HepG2 (cell line): ENCODE measurements at regions of chr4 and their contacts with region 1.

Region 1: GRCh38 chr4:81069706-81070331 is 39.3 kb downstream of the BMP3 start:
- DNase-seq: peak; percentile 82
- ATAC-seq: peak; percentile 100
- H3K4me3 ChIP-seq: no peak overlapping the region
- H3K27ac ChIP-seq: no peak overlapping the region
- H3K4me1 ChIP-seq: no peaks in the 10 kb centered on the region
- H3K27me3 ChIP-seq: no peaks in the 10 kb centered on the region
- CTCF ChIP-seq: peak; percentile 88
- EP300 ChIP-seq: no peak
- POLR2A ChIP-seq: no peak
- RAD21 ChIP-seq: peak; percentile 38; the same call in 1 of the 2 replicates

Region 2: GRCh38 chr4:80852061-80852460 is 217.8 kb before region 1 on chr4:
- CTCF ChIA-PET with region 1: no interaction called
- POLR2A ChIA-PET with region 1: no interaction called
- in situ Hi-C with region 1: no loop called
- intact Hi-C with region 1: no loop called
- DNase-seq: no peak
- ATAC-seq: no peak
- H3K4me3 ChIP-seq: no peak overlapping the region
- H3K27ac ChIP-seq: no peak overlapping the region
- H3K4me1 ChIP-seq: no peaks in the 10 kb centered on the region
- H3K27me3 ChIP-seq: no peaks in the 10 kb centered on the region
- CTCF ChIP-seq: no peak
- EP300 ChIP-seq: no peak
- POLR2A ChIP-seq: no peak
- RAD21 ChIP-seq: no peak

Region 3: GRCh38 chr4:81260443-81261101 is 190.8 kb after region 1 on chr4:
- CTCF ChIA-PET with region 1: interaction called, 4 read pairs
- POLR2A ChIA-PET with region 1: no interaction called
- in situ Hi-C with region 1: no loop called
- intact Hi-C with region 1: loop called (anchors 1 kb)
- DNase-seq: no peak
- ATAC-seq: no peak
- H3K4me3 ChIP-seq: no peak overlapping the region
- H3K27ac ChIP-seq: no peak overlapping the region
- H3K4me1 ChIP-seq: no peaks in the 10 kb centered on the region
- H3K27me3 ChIP-seq: no peaks in the 10 kb centered on the region
- CTCF ChIP-seq: no peak
- EP300 ChIP-seq: no peak
- POLR2A ChIP-seq: no peak
- RAD21 ChIP-seq: no peak

Region 4: GRCh38 chr4:81351654-81352445 is 282.0 kb after region 1 on chr4:
- CTCF ChIA-PET with region 1: interaction called, 21 read pairs
- POLR2A ChIA-PET with region 1: no interaction called
- in situ Hi-C with region 1: loop called (anchors 10 kb)
- intact Hi-C with region 1: loop called (anchors 1 kb)
- DNase-seq: peak; percentile 42
- ATAC-seq: peak; percentile 89
- H3K4me3 ChIP-seq: no peak overlapping the region
- H3K27ac ChIP-seq: no peak overlapping the region
- H3K4me1 ChIP-seq: no peaks in the 10 kb centered on the region
- H3K27me3 ChIP-seq: no peaks in the 10 kb centered on the region
- CTCF ChIP-seq: peak; percentile 83
- EP300 ChIP-seq: no peak
- POLR2A ChIP-seq: no peak
- RAD21 ChIP-seq: 0 out of 2 replicates have a peak, but pooled peaks have one; percentile 28